ENCODE measurements at regions of chr3 and their contacts with region 1.

Region 1: DNA sequence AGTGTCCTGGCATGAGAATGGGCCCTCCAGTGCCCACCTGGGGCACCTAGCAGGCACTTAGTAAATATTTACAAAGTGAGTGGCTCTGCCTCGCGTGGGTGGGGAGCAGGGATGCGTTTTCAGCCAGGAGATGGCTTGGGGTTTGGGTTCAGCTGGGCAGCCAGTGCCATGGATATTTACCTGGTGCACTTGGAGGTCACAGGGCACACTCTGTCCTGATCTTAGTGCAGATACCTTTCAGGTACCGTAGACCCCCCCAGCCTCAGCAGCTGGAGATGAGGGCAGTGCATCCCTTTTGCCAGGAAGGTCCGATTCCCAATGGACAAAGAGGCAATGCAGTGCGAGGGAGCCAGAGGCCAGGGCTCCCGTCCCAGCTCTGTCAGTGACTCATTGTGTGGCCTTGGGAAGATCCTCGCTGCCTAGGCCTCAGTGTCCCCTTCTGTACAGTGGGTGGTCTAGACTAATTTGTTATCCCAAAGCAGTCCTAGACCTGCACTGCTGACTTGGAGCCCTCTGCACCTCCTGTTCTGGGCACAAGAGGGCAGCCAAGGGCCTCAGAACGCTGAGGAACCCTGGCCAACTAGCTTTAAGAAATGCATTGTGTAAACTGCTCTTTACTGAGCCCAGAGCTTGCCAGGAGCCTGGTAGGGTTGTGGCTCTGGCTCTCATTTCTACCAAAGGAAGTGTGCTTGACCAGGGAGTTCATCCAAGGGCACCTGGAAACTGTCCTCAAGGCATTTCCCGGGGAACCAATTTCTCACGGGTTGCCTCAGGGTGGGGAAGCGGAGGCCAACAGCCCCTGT is 16.0 kb downstream of the HDAC11 start:
- DNase-seq: peak; percentile 51 to 81 (median 68)
- ATAC-seq: peak; percentile 99
- H3K4me3 ChIP-seq: no peak overlapping the region
- H3K4me3 Mint-ChIP-seq: no peak overlapping the region
- H3K27ac ChIP-seq: no peak overlapping the region
- H3K27ac Mint-ChIP-seq: no peak overlapping the region
- H3K4me1 ChIP-seq: no peaks in the 10 kb centered on the region
- H3K4me1 Mint-ChIP-seq: no peaks in the 10 kb centered on the region
- H3K27me3 ChIP-seq: no peaks in the 10 kb centered on the region
- H3K27me3 Mint-ChIP-seq: no peaks in the 10 kb centered on the region
- CTCF ChIP-seq: peak; percentile 76

Region 2: DNA sequence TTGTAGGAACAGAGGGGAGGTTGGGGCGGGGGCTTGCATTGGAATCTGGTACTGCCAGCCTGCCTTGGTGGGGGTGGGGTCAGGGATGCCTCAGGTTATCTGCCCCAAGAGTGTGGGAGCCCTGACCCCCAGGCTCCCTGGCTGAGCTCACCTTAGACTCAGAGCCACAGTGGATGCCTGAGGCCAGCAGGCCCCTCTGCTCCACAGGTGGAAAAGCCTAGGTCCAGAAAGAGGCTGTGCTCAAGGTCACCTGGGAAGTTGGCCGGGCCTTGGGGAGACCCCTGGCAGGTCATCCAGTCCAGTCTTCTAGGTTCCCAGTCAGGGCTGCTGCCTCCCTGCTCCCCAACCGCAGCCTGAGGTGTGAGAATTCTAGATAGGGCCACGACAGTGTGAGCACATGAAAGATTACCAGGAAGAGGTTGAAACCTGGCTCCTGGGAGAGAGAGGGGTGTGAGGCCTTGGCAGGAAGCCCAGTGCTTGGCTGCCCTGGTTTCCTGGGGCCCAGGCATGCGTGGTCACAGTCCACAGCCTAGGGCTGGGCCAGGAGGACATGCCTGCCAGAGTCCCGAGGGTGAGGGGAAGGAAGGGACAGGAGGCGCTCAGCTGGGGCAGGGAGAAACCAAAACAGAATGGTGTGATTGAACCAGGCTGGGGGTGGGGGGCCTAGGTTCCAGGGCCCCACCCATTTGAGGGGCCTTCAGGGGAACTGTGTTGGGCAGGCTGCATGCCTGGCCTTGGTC is 11.1 kb before region 1 on chr3:
- CTCF ChIA-PET with region 1: interaction called, 11 read pairs
- POLR2A ChIA-PET with region 1: no interaction called
- intact Hi-C with region 1: no loop called
- DNase-seq: peak in 2 of 9 experiments; percentile 53 to 61
- ATAC-seq: no peak
- H3K4me3 ChIP-seq: no peak overlapping the region
- H3K4me3 Mint-ChIP-seq: no peak overlapping the region
- H3K27ac ChIP-seq: peak overlapping the region in 1 of 2 experiments; percentile 36
- H3K27ac Mint-ChIP-seq: peak overlapping the region; percentile 81
- H3K4me1 ChIP-seq: peaks cover 17% of the 10 kb centered on the region
- H3K4me1 Mint-ChIP-seq: peaks cover 18% of the 10 kb centered on the region
- H3K27me3 ChIP-seq: no peaks in the 10 kb centered on the region
- H3K27me3 Mint-ChIP-seq: no peaks in the 10 kb centered on the region
- CTCF ChIP-seq: no peak

Region 3: GRCh38 chr3:13594614-13595421 is 98.7 kb after region 1 on chr3:
- CTCF ChIA-PET with region 1: no interaction called
- POLR2A ChIA-PET with region 1: no interaction called
- intact Hi-C with region 1: no loop called
- DNase-seq: no peak
- ATAC-seq: no peak
- H3K4me3 ChIP-seq: no peak overlapping the region
- H3K4me3 Mint-ChIP-seq: no peak overlapping the region
- H3K27ac ChIP-seq: no peak overlapping the region
- H3K27ac Mint-ChIP-seq: no peak overlapping the region
- H3K4me1 ChIP-seq: no peaks in the 10 kb centered on the region
- H3K4me1 Mint-ChIP-seq: peaks cover 2% of the 10 kb centered on the region
- H3K27me3 ChIP-seq: no peaks in the 10 kb centered on the region
- H3K27me3 Mint-ChIP-seq: peaks cover 2% of the 10 kb centered on the region
- CTCF ChIP-seq: no peak

Region 4: GRCh38 chr3:13648060-13649001 is 152.2 kb after region 1 on chr3:
- CTCF ChIA-PET with region 1: interaction called, 389 read pairs
- POLR2A ChIA-PET with region 1: interaction called, 6 read pairs
- intact Hi-C with region 1: loop called (anchors 1 kb)
- DNase-seq: peak; percentile 56 to 88 (median 75)
- ATAC-seq: peak; percentile 27
- H3K4me3 ChIP-seq: no peak overlapping the region
- H3K4me3 Mint-ChIP-seq: no peak overlapping the region
- H3K27ac ChIP-seq: no peak overlapping the region
- H3K27ac Mint-ChIP-seq: no peak overlapping the region
- H3K4me1 ChIP-seq: peaks cover 33% of the 10 kb centered on the region
- H3K4me1 Mint-ChIP-seq: peaks cover 39% of the 10 kb centered on the region
- H3K27me3 ChIP-seq: peaks cover 0 to 3% of the 10 kb centered on the region in 2 experiments
- H3K27me3 Mint-ChIP-seq: peaks cover 15% of the 10 kb centered on the region
- CTCF ChIP-seq: peak; percentile 94